ENCODE measurements at regions of chr7 and their contacts with region 1.

Region 1: GRCh38 chr7:78020136-78020873 is 221.7 kb downstream of the PHTF2 start:
- DNase-seq: peak; percentile 56 to 65
- H3K4me3 ChIP-seq: peak overlapping the region; percentile 54
- H3K4me3 Mint-ChIP-seq: peak overlapping the region; percentile 84
- H3K27ac Mint-ChIP-seq: peak overlapping the region; percentile 77
- H3K4me1 ChIP-seq: peaks cover 14% of the 10 kb centered on the region
- H3K4me1 Mint-ChIP-seq: peaks cover 11% of the 10 kb centered on the region
- H3K27me3 ChIP-seq: no peaks in the 10 kb centered on the region
- H3K27me3 Mint-ChIP-seq: peaks cover 3% of the 10 kb centered on the region
- CTCF ChIP-seq: peak; percentile 60 to 77

Region 2: GRCh38 chr7:77877791-77878190 is 142.5 kb before region 1 on chr7:
- CTCF ChIA-PET with region 1: no interaction called
- POLR2A ChIA-PET with region 1: no interaction called
- intact Hi-C with region 1: no loop called
- DNase-seq: no peak
- H3K4me3 ChIP-seq: no peak overlapping the region
- H3K4me3 Mint-ChIP-seq: no peak overlapping the region
- H3K27ac Mint-ChIP-seq: no peak overlapping the region
- H3K4me1 ChIP-seq: peaks cover 37% of the 10 kb centered on the region
- H3K4me1 Mint-ChIP-seq: peaks cover 26% of the 10 kb centered on the region
- H3K27me3 ChIP-seq: no peaks in the 10 kb centered on the region
- H3K27me3 Mint-ChIP-seq: no peaks in the 10 kb centered on the region
- CTCF ChIP-seq: no peak

Region 3: GRCh38 chr7:77940647-77941046 is 79.7 kb before region 1 on chr7:
- CTCF ChIA-PET with region 1: interaction called, 5 read pairs
- POLR2A ChIA-PET with region 1: no interaction called
- intact Hi-C with region 1: loop called (anchors 1 kb)
- DNase-seq: peak in 1 of 2 experiments; percentile 31
- H3K4me3 ChIP-seq: no peak overlapping the region
- H3K4me3 Mint-ChIP-seq: no peak overlapping the region
- H3K27ac Mint-ChIP-seq: no peak overlapping the region
- H3K4me1 ChIP-seq: peaks cover 10% of the 10 kb centered on the region
- H3K4me1 Mint-ChIP-seq: peaks cover 21% of the 10 kb centered on the region
- H3K27me3 ChIP-seq: no peaks in the 10 kb centered on the region
- H3K27me3 Mint-ChIP-seq: no peaks in the 10 kb centered on the region
- CTCF ChIP-seq: peak; percentile 42 to 72

Region 4: DNA sequence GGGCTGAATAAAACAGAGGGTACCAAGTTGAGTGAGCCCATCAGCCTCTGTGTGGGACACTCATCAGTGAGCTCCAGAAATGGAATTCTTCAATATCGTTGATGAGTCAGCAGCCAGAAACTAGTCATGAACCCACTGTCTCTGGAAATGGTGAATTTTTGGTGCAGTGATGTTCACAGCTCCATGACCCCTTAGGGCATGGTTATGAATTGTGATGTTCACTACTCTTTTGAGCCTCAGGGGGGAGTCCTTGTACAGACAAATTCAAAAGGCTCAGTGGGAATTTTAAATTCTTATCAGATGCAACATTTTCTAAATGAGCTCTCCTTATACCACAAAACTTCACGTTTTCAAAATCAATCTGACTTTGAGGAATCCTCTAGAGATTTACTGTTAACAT is 114.0 kb after region 1 on chr7:
- CTCF ChIA-PET with region 1: interaction called, 8 read pairs
- POLR2A ChIA-PET with region 1: no interaction called
- intact Hi-C with region 1: loop called (anchors 1 kb)
- DNase-seq: peak in 1 of 2 experiments; percentile 37
- H3K4me3 ChIP-seq: no peak overlapping the region
- H3K4me3 Mint-ChIP-seq: no peak overlapping the region
- H3K27ac Mint-ChIP-seq: no peak overlapping the region
- H3K4me1 ChIP-seq: no peaks in the 10 kb centered on the region
- H3K4me1 Mint-ChIP-seq: no peaks in the 10 kb centered on the region
- H3K27me3 ChIP-seq: no peaks in the 10 kb centered on the region
- H3K27me3 Mint-ChIP-seq: peaks cover 5% of the 10 kb centered on the region
- CTCF ChIP-seq: peak; percentile 41 to 63

Region 5: DNA sequence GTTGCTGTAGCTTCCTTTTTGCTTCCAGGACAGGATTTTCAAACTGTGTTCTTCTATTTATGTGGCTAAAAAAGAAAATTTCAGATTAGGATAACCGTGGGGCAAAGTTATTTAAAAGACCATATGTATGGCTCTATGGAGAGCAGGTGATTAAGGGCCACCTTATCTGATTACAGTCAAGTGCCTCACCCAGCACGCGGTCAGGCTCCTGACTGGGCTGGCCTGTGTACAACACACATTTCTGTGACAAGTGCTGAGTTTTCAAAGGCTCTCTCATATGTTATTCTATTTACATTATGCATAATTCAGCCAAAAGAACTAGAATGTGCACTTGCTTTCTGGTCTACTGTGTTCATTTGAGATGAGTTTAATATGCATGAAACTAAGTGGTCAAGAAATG is 325.7 kb after region 1 on chr7:
- CTCF ChIA-PET with region 1: no interaction called
- POLR2A ChIA-PET with region 1: no interaction called
- intact Hi-C with region 1: loop called (anchors 10 kb)
- DNase-seq: no peak
- H3K4me3 ChIP-seq: no peak overlapping the region
- H3K4me3 Mint-ChIP-seq: no peak overlapping the region
- H3K27ac Mint-ChIP-seq: no peak overlapping the region
- H3K4me1 ChIP-seq: no peaks in the 10 kb centered on the region
- H3K4me1 Mint-ChIP-seq: no peaks in the 10 kb centered on the region
- H3K27me3 ChIP-seq: no peaks in the 10 kb centered on the region
- H3K27me3 Mint-ChIP-seq: peaks cover 12% of the 10 kb centered on the region
- CTCF ChIP-seq: no peak

Region 6: DNA sequence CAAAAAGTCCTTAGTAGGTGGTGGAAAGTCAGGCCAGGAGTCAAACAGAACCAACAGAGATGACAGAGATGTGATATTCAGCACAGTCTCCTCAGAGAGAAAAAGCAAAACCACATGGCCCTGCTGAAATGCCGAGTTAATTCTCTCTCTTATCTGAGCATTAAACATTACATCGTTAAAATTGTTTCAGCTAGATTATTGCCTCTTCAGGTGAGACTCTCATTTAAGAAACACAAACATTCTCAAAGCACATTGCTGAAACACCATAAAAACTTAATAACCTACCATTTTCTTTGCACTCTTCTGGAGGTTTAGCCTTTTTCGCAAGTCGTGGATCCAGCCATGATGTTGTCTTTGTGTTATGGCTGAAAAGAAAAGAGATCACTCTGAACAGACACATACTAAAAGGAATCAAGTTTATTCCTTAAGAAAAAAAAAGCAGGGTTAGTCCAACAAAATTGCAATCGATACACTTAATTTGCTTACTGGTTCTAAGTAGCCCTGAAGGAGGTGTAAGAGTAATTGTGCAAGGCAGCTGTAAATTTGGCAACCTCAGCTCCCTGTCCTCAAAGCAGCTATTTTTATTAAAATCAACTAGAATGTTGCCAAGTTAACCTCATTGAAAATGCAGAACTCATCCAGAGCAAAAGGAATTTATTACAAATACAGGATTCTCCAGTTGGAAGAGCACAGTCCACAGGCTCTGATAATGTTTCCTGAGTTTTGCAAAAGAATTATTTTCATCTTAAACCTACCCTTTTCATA is 469.4 kb after region 1 on chr7:
- CTCF ChIA-PET with region 1: no interaction called
- POLR2A ChIA-PET with region 1: no interaction called
- intact Hi-C with region 1: loop called (anchors 10 kb)
- DNase-seq: no peak
- H3K4me3 ChIP-seq: no peak overlapping the region
- H3K4me3 Mint-ChIP-seq: no peak overlapping the region
- H3K27ac Mint-ChIP-seq: no peak overlapping the region
- H3K4me1 ChIP-seq: peaks cover 9% of the 10 kb centered on the region; the same call in 1 of the 2 replicates
- H3K4me1 Mint-ChIP-seq: peaks cover 8% of the 10 kb centered on the region
- H3K27me3 ChIP-seq: no peaks in the 10 kb centered on the region
- H3K27me3 Mint-ChIP-seq: no peaks in the 10 kb centered on the region
- CTCF ChIP-seq: no peak